ENCODE measurements at regions of chr20 and their contacts with region 1.

Region 1: DNA sequence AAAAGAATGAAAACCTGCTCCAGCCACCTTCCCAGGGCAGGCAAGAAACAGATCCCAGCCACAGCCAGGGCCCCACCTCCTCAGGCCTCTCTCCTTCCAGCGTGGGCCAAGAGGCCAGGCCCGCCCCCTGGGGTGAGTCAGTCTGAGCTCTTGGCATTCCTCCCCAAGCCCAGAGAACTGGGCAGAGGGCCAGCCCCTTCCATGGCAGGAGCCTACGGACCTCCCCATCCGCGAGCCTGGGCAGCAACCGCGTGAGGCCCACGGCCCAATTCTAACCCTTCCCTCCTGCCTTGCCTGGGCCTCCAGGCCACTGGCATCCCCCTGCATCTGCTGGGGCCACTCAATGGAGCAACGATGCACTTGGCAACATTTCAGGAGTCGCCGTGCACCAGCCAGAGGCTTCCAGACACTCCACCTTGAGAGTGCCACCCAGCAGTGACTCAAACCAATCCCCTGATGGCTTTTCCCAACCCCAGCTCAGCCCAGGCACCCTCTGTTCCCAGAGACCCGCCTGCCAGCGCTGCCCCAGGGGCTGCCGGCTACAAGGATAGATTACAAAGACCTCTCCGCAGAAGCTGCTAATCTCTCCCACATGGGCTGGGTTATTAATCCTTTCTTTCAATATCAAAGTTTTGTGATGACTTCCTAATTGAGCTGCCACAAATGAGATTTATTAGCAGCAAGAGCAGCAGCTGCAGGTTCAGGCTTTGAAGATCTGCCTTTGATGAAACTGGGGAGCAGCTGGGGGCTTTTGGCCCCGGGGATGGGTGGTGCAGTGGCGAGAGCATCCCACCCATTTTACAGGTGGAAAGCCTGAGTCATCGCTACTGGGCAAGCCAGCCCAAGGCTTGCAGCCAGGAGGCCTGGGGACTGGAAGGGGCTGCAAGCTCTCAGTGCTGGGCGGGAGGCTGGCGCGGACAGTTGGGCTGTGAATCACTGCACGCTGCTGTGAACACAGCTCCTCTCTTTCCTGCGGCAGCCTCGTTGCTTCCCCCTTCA is 85.7 kb downstream of the NFATC2 start:
- DNase-seq: peak; percentile 93 to 100
- H3K4me3 ChIP-seq: peak overlapping the region; percentile 51; the same call in 1 of the 2 replicates
- H3K27ac ChIP-seq: peak overlapping the region; percentile 84
- H3K4me1 ChIP-seq: peaks cover 26% of the 10 kb centered on the region
- H3K27me3 ChIP-seq: no peaks in the 10 kb centered on the region
- CTCF ChIP-seq: no peak

Region 2: GRCh38 chr20:51385646-51386530 is 70.9 kb before region 1 on chr20:
- CTCF ChIA-PET with region 1: interaction called, 3 read pairs
- POLR2A ChIA-PET with region 1: interaction called, 10 read pairs
- intact Hi-C with region 1: no loop called
- DNase-seq: peak in 1 of 2 experiments; percentile 16
- H3K4me3 ChIP-seq: no peak overlapping the region
- H3K27ac ChIP-seq: no peak overlapping the region
- H3K4me1 ChIP-seq: peaks cover 21% of the 10 kb centered on the region
- H3K27me3 ChIP-seq: no peaks in the 10 kb centered on the region
- CTCF ChIP-seq: peak; percentile 73

Region 3: DNA sequence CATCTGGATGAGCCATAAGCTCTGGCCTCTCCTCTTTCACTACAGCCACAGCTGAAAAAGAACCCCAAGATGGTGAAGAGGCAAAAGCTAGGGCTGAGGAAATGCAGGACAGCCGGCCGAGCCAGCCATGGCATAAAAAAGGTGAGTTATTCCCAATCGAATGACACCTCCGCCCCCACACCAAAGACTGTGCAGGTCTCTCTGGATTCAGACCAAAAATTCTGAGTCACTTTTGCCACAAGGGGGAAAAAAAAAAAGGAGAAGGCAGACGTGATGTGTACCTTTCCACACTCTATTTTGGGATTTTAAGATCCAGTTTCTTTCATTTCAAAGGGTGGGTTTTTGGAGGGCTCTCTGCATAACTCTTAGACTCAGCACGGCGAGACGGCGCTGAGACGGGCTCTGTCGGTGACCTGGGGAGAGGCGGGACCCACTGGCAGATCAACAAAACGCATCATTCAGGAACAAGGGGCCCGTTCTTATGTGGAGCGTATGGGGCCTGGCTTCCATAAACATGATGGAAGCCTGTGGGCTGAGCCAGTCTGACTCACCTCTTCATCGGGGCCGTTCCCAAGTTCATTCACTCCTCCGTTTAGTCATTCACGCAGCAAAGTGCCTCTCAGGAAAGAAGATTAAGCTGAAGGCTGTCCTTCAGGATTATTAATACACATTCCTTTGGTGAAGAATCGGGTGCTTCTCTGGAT is 30.9 kb after region 1 on chr20:
- CTCF ChIA-PET with region 1: interaction called, 3 read pairs
- POLR2A ChIA-PET with region 1: no interaction called
- intact Hi-C with region 1: loop called (anchors 1 kb)
- DNase-seq: peak; percentile 81 to 93
- H3K4me3 ChIP-seq: peak overlapping the region; percentile 57
- H3K27ac ChIP-seq: peak overlapping the region; percentile 92
- H3K4me1 ChIP-seq: peaks cover 24% of the 10 kb centered on the region
- H3K27me3 ChIP-seq: no peaks in the 10 kb centered on the region
- CTCF ChIP-seq: no peak; the same call in 1 of the 2 replicates

Region 4: GRCh38 chr20:51541189-51542032 is 84.6 kb after region 1 on chr20:
- CTCF ChIA-PET with region 1: no interaction called
- POLR2A ChIA-PET with region 1: interaction called, 14 read pairs
- intact Hi-C with region 1: no loop called
- DNase-seq: peak in 1 of 2 experiments; percentile 35
- H3K4me3 ChIP-seq: peak overlapping the region; percentile 90
- H3K27ac ChIP-seq: no peak overlapping the region
- H3K4me1 ChIP-seq: peaks cover 12% of the 10 kb centered on the region
- H3K27me3 ChIP-seq: peaks cover 22% of the 10 kb centered on the region
- CTCF ChIP-seq: no peak